ENCODE measurements at regions of chr20 and their contacts with region 1.

Region 1: DNA sequence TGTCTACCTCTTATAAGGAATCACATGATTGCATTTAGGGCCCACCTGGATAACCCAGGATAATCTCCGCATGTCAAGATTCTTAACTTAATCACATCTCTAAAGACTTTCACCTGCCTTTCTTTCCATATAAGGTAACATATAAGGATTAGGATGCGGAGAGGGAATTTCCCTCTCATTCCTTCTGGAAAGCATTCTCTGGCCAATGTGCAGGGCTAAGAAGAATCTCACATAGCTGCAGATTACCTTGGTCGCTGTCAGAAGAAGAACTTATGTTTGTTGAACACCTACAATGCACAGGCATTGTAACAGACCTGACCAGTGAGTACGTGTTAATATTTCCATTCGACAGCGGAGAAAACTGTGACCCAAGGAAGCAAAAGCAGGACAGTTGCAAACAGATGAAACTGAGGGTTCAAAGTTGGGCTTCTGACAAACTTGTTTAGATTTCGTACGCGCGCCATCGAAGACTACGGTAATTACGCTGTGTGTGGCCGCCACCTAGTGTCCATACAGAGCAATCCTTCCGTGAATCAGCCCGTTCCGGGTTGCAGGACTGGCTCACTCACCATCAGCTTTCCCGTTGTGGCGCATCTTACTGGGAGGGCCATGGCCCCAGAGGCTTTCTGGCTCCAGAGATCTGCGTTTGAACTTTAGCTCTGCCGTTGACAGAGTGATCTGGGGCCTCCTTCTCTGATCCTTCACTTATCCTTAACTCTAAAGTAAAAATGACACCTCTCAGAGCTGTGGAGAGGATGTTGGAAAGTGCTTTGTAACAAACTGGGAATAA is 9.5 kb downstream of the C20orf202 start:
- DNase-seq: peak; percentile 80
- ATAC-seq: peak; percentile 98
- H3K4me3 ChIP-seq: no peak overlapping the region; a peak in 1 of 6 replicates
- H3K27ac ChIP-seq: no peak overlapping the region
- H3K4me1 ChIP-seq: peaks cover 9% of the 10 kb centered on the region; the same call in 1 of the 2 replicates
- H3K27me3 ChIP-seq: peaks cover 0 to 23% of the 10 kb centered on the region in 2 experiments; a peak in 2 of 5 replicates
- CTCF ChIP-seq: peak; percentile 99
- EP300 ChIP-seq: no peak
- POLR2A ChIP-seq: no peak
- RAD21 ChIP-seq: peak; percentile 96

Region 2: DNA sequence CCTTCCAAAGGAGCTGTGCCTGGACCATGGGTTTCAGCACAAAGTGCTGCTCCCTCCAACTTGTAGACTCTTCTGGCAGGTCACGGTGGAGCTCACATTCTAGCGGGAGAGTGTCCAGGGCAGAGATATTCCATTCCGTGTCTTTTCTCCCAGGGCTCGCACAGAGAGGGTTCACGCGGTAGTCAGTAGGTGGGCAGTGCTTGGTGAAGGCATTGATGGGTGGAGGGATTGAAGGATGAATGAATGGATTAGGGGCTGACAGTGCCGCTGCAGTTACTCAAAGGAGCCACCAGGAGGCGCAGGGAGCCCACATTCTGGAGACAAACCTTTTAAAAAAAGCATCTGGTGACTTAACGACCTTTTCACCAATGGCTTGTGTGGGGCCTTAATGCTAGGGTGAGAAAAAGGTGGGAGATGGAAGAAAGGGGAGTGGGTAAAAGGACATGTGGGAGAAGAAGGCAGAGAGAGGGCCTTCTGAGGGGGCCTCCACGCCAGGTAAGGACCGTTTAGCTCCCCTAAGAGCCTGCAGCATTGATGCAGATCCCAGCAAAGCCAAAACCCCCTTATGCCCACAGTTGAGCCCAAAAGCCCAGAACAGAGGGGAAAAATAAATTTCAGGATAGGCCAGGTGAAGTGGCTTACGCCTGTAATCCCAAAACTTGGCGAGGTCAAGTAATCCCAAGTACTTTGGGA is 396.7 kb before region 1 on chr20:
- CTCF ChIA-PET with region 1: interaction called, 6 read pairs
- POLR2A ChIA-PET with region 1: no interaction called
- in situ Hi-C with region 1: no loop called
- intact Hi-C with region 1: loop called (anchors 1 kb)
- DNase-seq: peak; percentile 70
- ATAC-seq: peak; percentile 68
- H3K4me3 ChIP-seq: no peak overlapping the region
- H3K27ac ChIP-seq: no peak overlapping the region
- H3K4me1 ChIP-seq: no peaks in the 10 kb centered on the region
- H3K27me3 ChIP-seq: no peaks in the 10 kb centered on the region
- CTCF ChIP-seq: peak; percentile 97
- EP300 ChIP-seq: no peak
- POLR2A ChIP-seq: no peak
- RAD21 ChIP-seq: peak; percentile 91

Region 3: DNA sequence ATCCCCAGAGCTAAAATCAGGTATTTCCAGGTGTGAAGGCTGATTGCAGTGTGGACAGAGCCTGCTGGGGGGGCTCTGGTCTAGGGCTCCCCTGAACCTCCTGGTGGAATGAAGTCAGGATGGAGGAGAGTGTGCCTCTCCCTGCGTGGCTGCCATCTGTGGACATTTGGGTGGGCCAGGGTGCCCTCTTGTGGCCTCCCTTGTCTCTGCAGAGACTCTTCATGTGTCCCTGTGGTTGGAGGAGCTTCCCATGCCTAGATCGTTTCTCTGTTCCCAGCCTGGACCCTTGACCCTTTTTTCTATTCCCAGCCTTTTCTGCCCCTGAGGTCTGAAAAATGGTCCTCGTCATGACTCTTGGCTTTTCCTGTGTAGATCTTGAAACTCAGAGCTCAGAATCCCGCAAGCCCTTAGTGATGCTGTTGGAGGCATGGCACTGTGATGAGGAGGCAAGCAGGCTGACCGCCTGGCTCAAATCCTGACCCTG is 104.3 kb before region 1 on chr20:
- CTCF ChIA-PET with region 1: interaction called, 17 read pairs
- POLR2A ChIA-PET with region 1: no interaction called
- in situ Hi-C with region 1: no loop called
- intact Hi-C with region 1: loop called (anchors 1 kb)
- DNase-seq: peak; percentile 60
- ATAC-seq: peak; percentile 96
- H3K4me3 ChIP-seq: no peak overlapping the region
- H3K27ac ChIP-seq: no peak overlapping the region
- H3K4me1 ChIP-seq: no peaks in the 10 kb centered on the region
- H3K27me3 ChIP-seq: no peaks in the 10 kb centered on the region
- CTCF ChIP-seq: peak; percentile 95
- EP300 ChIP-seq: no peak
- POLR2A ChIP-seq: no peak
- RAD21 ChIP-seq: peak; percentile 75

Region 4: GRCh38 chr20:1118336-1119127 is 94.3 kb before region 1 on chr20 and contains the start of gene PSMF1:
- CTCF ChIA-PET with region 1: no interaction called
- POLR2A ChIA-PET with region 1: no interaction called
- in situ Hi-C with region 1: no loop called
- intact Hi-C with region 1: loop called (anchors 2 kb)
- DNase-seq: peak; percentile 92
- ATAC-seq: peak; percentile 89
- H3K4me3 ChIP-seq: peak within 1 kb of the TSS; percentile 80 to 99 (median 93)
- H3K27ac ChIP-seq: peak within 1 kb of the TSS; percentile 72
- H3K4me1 ChIP-seq: peaks cover 62% of the 10 kb centered on the region
- H3K27me3 ChIP-seq: no peaks in the 10 kb centered on the region; a peak in 1 of 5 replicates
- CTCF ChIP-seq: peak; percentile 63
- EP300 ChIP-seq: peak; percentile 73 to 86
- POLR2A ChIP-seq: peak; percentile 97
- RAD21 ChIP-seq: peak; percentile 77
- total RNA-seq, gene PSMF1: 86.0 and 113 TPM in 2 replicates

Region 5: DNA sequence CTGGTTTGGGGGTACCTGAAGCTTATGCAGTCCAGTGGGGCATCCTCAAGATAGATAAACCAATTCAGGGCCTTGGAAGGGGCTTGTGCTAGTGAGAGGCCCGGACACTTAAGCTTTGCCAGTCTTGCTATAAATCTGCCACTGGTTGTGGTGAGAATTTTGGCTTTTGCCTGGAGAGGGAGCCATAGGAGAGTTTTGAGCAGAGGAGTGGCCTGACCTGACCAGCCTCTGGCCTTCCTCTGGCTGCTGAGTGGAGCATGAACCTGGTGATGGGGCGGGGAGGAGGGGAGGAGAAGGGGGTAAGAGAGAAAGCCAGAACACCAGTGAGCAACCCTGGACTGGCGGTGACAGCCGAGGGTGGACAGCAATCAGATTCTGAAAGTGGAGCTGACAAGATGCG is 35.1 kb before region 1 on chr20:
- CTCF ChIA-PET with region 1: interaction called, 8 read pairs
- POLR2A ChIA-PET with region 1: no interaction called
- in situ Hi-C with region 1: no loop called
- intact Hi-C with region 1: loop called (anchors 1 kb)
- DNase-seq: peak; percentile 64
- ATAC-seq: peak; percentile 66
- H3K4me3 ChIP-seq: no peak overlapping the region
- H3K27ac ChIP-seq: no peak overlapping the region
- H3K4me1 ChIP-seq: 0 out of 2 replicates have a peak, but pooled peaks cover 7% of the 10 kb centered on the region
- H3K27me3 ChIP-seq: no peaks in the 10 kb centered on the region
- CTCF ChIP-seq: peak; percentile 68
- EP300 ChIP-seq: no peak
- POLR2A ChIP-seq: no peak
- RAD21 ChIP-seq: peak; percentile 52

Region 6: GRCh38 chr20:1196634-1197033 is 16.2 kb before region 1 on chr20:
- CTCF ChIA-PET with region 1: no interaction called
- POLR2A ChIA-PET with region 1: no interaction called
- in situ Hi-C with region 1: no loop called
- intact Hi-C with region 1: no loop called
- DNase-seq: no peak
- ATAC-seq: no peak
- H3K4me3 ChIP-seq: no peak overlapping the region
- H3K27ac ChIP-seq: no peak overlapping the region
- H3K4me1 ChIP-seq: no peaks in the 10 kb centered on the region
- H3K27me3 ChIP-seq: peaks cover 0 to 2% of the 10 kb centered on the region in 2 experiments; a peak in 2 of 5 replicates
- CTCF ChIP-seq: no peak
- EP300 ChIP-seq: no peak
- POLR2A ChIP-seq: no peak
- RAD21 ChIP-seq: no peak

Region 7: DNA sequence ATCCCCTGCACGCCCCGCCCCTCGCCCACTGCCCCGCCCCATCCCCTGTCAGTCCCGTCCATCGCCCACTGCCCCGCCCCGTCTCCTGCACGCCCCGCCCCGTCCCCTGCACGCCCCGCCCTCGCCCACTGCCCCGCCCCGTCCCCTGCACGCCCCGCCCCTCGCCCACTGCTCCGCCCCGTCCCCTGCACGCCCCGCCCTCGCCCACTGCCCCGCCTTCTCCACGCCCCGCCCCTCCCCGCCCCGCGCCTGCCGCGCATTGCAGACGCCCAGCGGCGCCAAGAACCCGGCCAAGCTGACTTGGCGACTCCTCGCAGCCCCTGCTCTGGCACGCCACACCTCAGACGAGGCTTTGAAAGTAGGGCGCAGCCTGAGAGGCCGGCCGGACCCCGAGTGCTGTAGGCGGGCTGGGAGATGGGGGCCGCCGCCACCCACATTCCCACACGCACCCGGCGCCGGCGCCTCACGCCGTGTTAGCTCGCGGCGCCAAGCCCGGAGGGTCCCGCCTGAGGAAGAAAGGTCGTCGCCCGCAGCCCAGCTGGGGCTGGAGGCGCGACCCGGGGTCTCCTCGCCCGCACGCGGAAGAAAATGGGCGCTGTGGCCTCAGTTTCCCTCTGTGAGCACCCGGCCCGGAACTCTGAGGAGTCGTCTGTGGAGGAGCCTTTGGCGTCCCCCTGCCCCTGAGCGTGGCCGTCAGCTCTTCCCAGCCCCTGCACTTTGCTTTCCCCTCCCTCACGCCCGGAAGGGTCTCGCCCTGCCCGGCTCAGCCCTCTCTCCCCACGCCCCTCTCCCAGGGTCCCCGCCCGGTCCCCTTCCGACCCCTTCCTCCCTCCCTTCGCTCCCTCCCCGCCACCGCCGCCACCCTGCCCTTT is 13.2 kb after region 1 on chr20 and contains the start of gene RAD21L1:
- CTCF ChIA-PET with region 1: no interaction called
- POLR2A ChIA-PET with region 1: no interaction called
- in situ Hi-C with region 1: no loop called
- intact Hi-C with region 1: no loop called
- DNase-seq: no peak
- ATAC-seq: peak; percentile 82
- H3K4me3 ChIP-seq: peak within 1 kb of the TSS; percentile 73 to 82 (median 75)
- H3K27ac ChIP-seq: no peak within 1 kb of the TSS
- H3K4me1 ChIP-seq: peaks cover 13% of the 10 kb centered on the region
- H3K27me3 ChIP-seq: peaks cover 4 to 27% of the 10 kb centered on the region in 2 experiments
- CTCF ChIP-seq: peak; percentile 29
- EP300 ChIP-seq: no peak
- POLR2A ChIP-seq: no peak
- RAD21 ChIP-seq: 0 out of 2 replicates have a peak, but pooled peaks have one; percentile 33
- total RNA-seq, gene RAD21L1: not detected in 2 replicates

Region 8: GRCh38 chr20:1255675-1256074 is 42.9 kb after region 1 on chr20:
- CTCF ChIA-PET with region 1: no interaction called
- POLR2A ChIA-PET with region 1: no interaction called
- in situ Hi-C with region 1: no loop called
- intact Hi-C with region 1: no loop called
- DNase-seq: no peak
- ATAC-seq: no peak
- H3K4me3 ChIP-seq: no peak overlapping the region
- H3K27ac ChIP-seq: no peak overlapping the region
- H3K4me1 ChIP-seq: no peaks in the 10 kb centered on the region
- H3K27me3 ChIP-seq: no peaks in the 10 kb centered on the region; a peak in 1 of 5 replicates
- CTCF ChIP-seq: no peak
- EP300 ChIP-seq: no peak
- POLR2A ChIP-seq: no peak
- RAD21 ChIP-seq: no peak

Measured in HepG2 (cell line).